Adrenal gland (tissue), 19 donors: ENCODE measurements at regions of chr20 and their contacts with region 1.

Region 1: DNA sequence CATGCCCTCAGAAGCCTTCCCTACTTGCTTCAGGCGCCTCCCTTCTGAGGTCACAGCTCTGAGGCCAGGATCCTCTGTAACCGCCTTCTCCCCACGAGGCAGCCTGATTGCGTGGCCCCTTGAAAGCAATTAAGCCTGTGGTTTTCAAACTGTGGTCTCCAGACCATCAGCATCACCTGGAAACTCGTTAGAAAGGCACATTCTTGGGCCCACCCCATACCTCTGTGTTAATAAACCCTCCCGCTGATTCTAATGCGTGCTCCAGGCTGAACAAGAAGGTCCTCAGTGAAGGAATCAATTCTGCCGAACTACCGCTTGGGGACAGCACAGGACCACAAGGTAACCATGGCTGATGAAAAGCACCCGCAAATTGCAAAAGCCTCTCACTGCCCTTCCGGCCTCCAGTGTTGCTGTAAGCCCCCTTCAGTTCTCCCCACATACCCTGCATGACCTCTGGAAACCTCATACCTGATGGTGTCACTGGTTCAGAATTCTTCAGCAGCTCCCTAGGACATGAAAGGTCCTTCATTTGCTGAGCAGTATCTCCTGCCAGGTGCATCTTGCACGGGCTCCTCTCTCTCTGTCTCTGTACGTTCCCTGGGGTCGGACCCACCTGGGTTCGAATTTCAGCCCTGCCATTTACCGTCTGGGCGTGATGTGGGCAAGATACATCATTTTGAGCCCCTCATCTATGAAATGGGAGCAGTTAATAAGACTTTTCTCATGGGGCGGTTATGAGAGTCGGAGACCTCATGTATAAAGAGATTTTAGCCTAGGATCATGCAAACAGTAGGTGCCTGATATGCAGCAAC is 93.3 kb upstream of the RNF24 start:
- DNase-seq: peak; percentile 56 to 86 (median 69)
- H3K4me3 ChIP-seq: no peak overlapping the region
- H3K27ac ChIP-seq: no peak overlapping the region
- H3K4me1 ChIP-seq: peaks cover 0 to 8% of the 10 kb centered on the region in 2 donors
- H3K27me3 ChIP-seq: no peaks in the 10 kb centered on the region
- CTCF ChIP-seq: peak; percentile 83 to 99 (median 97)
- POLR2A ChIP-seq: no peak

Region 2: DNA sequence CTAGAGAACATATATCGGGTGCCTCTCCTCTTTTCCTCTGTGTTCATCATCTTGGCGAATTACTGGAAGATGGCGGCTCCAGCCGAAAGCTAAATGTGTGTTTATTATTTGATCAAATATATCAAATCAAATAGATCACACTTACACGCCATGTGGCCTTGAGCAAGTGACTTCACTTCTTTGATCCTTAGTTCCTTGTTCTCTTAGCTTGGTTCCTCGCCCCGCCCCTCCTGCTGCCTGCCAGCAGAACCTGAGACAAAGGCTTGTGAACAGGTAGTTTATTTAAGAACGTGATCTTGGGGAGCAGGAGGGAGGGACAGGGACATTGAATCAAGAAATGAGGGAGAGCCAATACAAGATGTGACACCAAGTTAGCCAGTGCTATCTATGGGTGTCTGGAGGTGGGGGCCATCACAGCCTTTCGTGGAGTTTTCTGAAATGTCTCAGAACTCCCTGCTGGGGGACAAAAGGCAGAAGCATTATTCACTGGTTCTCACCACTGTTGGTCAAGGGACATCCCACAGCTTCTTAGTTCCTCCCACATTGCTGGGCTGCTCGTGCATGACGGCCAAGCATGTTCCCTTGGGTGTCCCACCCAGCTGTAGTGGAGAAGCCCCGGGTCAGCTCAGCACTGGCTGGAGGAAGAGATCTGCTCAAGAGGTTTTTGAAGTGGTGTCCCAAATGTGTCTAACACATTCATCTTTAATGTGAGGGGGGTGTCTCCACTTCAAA is 48.5 kb before region 1 on chr20:
- intact Hi-C with region 1: no loop called
- DNase-seq: no peak
- H3K4me3 ChIP-seq: no peak overlapping the region
- H3K27ac ChIP-seq: peak overlapping the region in 1 of 5 donors; percentile 36
- H3K4me1 ChIP-seq: peaks cover 12 to 18% of the 10 kb centered on the region in 2 donors
- H3K27me3 ChIP-seq: no peaks in the 10 kb centered on the region
- CTCF ChIP-seq: no peak
- POLR2A ChIP-seq: no peak

Region 3: GRCh38 chr20:4171538-4172116 is 62.9 kb after region 1 on chr20:
- intact Hi-C with region 1: loop called in 1 of 2 experiments (anchors 2 kb)
- DNase-seq: no peak
- H3K4me3 ChIP-seq: peak overlapping the region in 1 of 4 donors; percentile 51
- H3K27ac ChIP-seq: peak overlapping the region in 2 of 5 donors; percentile 51 to 75
- H3K4me1 ChIP-seq: peaks cover 0 to 14% of the 10 kb centered on the region in 2 donors
- H3K27me3 ChIP-seq: no peaks in the 10 kb centered on the region
- CTCF ChIP-seq: no peak
- POLR2A ChIP-seq: no peak

Region 4: DNA sequence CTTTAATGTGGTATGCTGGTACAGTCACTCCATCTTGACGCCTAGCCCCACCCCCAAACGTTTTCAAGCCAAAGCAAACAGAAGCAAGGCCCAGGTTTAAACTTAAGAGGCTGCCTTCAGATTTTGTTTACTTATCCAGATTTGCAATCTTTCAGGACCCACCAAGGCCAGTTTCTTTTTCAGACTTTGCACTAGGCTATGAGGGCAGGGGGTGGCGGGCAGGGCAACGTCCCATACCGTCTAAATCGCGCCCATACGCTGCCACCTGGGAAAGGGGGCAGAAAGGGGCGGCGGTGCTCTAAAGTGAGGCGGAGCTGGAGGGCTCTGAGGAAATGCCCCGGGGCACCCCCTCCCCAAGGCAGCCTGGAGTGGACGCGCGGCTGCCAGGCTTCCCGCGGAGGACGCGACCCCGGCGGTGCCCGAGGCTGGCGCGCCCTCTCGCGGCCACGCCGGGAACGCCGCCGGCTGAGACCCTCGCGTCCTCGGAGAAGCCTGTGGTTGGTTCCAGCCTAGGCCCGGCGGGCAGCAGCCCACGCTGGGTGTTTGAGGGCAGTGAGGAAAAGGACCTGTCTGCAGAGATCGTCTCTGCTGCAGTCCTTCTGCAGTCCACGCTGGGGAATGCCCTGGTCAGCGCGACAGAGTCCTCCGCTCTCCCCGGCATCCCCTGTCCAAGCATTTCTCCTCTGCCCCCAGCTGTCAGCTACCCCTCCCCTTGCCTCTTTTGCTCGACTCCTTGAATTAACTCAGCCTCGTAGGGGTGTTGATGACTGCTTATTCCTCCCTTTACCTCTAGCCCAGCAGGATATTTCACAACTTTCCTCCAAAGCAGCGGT is 483.8 kb after region 1 on chr20:
- intact Hi-C with region 1: loop called in 1 of 2 experiments (anchors 5 kb)
- DNase-seq: peak in 5 of 7 donors; percentile 21 to 47 (median 36)
- H3K4me3 ChIP-seq: peak overlapping the region in 1 of 4 donors; percentile 19
- H3K27ac ChIP-seq: no peak overlapping the region
- H3K4me1 ChIP-seq: peaks cover 0 to 9% of the 10 kb centered on the region in 2 donors
- H3K27me3 ChIP-seq: peaks cover 10% of the 10 kb centered on the region
- CTCF ChIP-seq: peak; percentile 54 to 97 (median 76)
- POLR2A ChIP-seq: no peak